Aorta (tissue), 5 donors: ENCODE measurements at regions of chr7 and their contacts with region 1.

Region 1: GRCh38 chr7:131959106-131959812 is 402.8 kb upstream of the PODXL start:
- DNase-seq: no peak
- ATAC-seq: no peak
- H3K4me3 ChIP-seq: no peak overlapping the region
- H3K27ac ChIP-seq: no peak overlapping the region
- H3K4me1 ChIP-seq: no peaks in the 10 kb centered on the region
- H3K27me3 ChIP-seq: no peaks in the 10 kb centered on the region

Region 2: DNA sequence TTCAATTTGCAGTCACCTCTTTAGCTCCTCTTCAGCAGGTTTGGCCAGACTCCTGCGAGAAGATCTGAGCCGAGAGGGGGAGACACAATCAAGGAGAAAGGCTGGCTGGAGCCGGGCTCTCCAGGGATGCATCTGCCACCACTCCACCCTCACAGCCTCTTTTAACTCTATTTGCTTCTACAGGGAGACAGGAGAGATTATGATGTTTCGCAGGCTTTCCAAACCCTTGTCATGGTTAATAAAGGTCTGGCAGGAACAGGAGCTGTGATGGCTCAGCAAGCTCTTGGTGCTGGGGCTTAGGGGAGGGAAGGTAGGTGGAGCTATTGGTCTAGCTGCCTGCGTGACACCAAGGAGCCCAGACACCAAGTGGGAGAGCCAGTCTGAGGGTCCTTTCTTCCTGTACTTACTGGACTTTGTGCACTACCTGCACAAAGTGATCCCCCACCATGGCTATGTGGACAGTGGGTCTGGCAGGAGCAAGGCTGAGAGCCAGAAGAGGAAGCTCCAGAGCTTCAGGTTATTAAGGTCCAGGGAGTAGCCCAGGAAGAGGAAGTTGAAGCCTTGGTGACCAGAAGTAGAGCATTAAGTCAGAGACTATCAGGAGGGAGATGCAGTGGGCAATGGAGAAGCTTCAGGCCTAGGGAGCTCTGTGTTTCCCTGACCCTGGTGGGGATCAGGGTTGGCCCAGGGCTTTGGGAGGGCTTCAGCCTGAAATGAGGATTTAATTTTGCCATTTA is 45.4 kb after region 1 on chr7:
- intact Hi-C with region 1: loop called in 1 of 2 experiments (anchors 10 kb)
- DNase-seq: no peak
- ATAC-seq: no peak
- H3K4me3 ChIP-seq: no peak overlapping the region
- H3K27ac ChIP-seq: no peak overlapping the region
- H3K4me1 ChIP-seq: no peaks in the 10 kb centered on the region
- H3K27me3 ChIP-seq: no peaks in the 10 kb centered on the region

Region 3: DNA sequence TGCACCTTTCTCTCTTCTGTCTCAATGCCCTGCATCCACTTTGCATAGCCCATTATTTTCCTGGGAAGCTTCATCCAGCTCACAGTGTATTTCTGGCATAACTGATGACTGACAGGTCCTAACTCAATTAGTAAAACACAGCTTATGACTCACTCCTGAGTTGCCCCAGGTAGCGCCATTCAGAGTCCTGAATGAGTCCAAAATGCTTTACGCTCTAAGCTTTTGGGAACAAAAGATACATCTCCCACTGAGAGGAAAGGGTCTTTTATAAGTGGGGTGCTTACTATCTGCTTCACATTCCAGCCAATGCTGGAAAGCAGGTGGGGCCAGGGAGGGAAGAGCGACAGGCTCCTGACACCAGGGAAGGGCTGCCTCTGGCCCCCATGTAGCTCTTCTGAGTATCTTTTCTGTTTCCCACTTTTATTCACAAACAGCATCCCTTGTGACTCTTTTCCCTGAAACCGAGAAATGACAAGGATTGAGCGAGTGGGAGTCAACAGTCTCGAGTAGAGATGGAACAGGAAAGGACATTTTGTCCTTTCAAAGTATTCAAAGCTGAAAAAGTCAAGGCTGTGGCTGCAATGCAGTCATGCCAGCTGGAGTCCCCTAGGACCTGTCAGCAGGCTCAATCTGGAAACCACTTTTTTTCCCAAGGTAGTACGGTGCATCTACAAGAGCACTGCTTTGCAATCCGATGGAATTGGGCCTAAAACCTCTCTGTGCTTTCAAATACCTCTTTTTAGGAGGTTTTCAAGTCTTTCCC is 76.5 kb after region 1 on chr7:
- intact Hi-C with region 1: no loop called
- DNase-seq: no peak
- ATAC-seq: no peak
- H3K4me3 ChIP-seq: no peak overlapping the region
- H3K27ac ChIP-seq: peak overlapping the region in 1 of 2 donors; percentile 55
- H3K4me1 ChIP-seq: no peaks in the 10 kb centered on the region
- H3K27me3 ChIP-seq: no peaks in the 10 kb centered on the region

Region 4: DNA sequence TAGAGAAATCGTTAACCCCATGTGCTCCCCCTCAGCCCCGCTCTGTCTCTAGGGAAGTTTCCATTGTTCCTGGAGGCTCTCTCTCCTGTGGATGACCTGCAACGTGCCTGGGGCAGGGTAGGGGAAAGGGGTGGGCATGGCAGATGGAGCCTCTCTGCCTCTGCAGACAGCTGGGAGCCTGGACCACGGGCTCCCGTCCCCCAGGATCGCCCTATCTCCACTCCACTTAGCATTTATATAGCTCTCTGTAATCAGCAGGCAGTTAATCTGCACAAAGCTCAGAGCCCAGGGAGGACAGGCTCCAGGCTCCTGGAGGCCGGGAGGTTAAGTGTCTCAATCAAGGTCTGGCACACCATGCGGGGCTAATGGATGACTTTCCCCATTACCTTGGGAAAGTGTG is 247.3 kb after region 1 on chr7:
- intact Hi-C with region 1: no loop called
- DNase-seq: no peak
- ATAC-seq: no peak
- H3K4me3 ChIP-seq: no peak overlapping the region
- H3K27ac ChIP-seq: no peak overlapping the region
- H3K4me1 ChIP-seq: no peaks in the 10 kb centered on the region
- H3K27me3 ChIP-seq: no peaks in the 10 kb centered on the region